ENCODE measurements at regions of chr6 and their contacts with region 1.

Region 1: DNA sequence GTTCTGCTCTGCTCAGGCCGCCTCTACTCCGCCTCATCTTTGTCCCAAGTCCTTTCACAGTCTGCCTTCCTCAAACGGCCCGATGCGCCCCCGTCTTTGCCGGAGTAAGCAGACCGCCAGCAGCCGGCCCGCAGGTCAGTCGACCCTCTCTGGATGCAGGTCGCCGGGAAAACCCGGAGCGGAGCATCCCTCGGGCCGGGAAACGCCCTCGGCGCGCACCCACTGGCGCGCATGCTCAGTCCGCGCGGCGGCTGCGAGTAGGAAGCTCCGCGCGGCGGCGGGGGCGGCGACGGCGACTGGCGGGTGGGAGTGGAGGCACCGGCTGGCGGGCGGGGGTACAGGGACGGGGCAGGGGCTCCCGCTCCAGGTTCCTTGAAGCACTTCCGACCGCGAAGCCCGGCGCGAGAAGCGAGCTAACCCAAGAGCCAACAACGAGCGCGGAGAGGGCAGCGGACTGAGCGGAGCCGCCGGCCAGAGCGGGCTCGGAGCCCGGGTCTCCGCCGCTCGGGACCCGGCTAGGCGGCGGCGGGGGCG is at the start of gene LRRC1:
- DNase-seq: peak; percentile 93 to 98
- H3K4me3 ChIP-seq: peak within 1 kb of the TSS; percentile 98
- H3K4me3 Mint-ChIP-seq: peak within 1 kb of the TSS; percentile 97
- H3K27ac Mint-ChIP-seq: peak within 1 kb of the TSS; percentile 94
- H3K4me1 ChIP-seq: peaks cover 24% of the 10 kb centered on the region
- H3K4me1 Mint-ChIP-seq: peaks cover 28% of the 10 kb centered on the region
- H3K27me3 ChIP-seq: no peaks in the 10 kb centered on the region
- H3K27me3 Mint-ChIP-seq: no peaks in the 10 kb centered on the region
- CTCF ChIP-seq: no peak
- total RNA-seq, gene LRRC1: 60.8 and 66.1 TPM in 2 replicates

Region 2: DNA sequence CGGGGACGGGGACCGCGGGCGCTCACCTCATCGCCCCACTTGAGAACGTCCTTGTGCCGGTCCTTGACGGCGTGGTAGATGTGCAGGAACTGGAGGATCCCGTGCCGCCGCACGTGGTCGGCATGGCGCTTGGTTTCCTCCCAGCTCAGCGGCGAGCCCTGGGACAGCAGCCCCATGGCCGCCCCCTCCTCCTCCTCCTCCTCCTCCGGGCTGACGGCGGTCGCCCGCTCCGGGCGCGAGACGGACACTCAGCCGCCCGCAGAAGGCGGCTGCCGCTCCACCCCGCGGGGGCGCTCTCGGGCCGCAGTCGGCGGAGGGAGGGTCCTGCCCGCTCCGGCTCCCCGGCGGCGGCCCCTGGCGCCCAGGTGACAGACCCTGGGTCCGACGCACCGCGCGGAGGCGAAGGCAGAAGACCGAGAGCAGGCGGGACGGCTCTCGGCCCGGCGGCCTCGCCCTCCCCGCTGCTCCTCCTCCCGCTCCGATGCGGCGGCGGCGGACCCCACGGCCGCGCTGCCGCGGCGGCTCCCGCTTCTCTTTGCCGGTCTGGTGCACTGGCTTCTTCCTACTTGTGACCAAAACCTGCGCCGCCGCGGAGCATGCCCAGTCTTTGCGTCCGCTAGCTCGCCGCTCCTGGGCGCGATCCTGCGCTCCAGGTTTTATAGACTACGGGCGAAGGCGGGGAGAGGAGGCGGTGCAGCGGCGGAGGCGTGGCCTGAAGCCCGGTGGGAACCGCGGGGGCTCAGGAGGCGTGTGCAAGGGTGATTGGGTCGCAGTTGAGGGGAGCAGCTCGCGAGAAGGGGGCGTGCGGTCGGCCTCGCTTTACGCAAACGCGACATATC is 250.1 kb before region 1 on chr6 and contains the start of gene GCLC:
- CTCF ChIA-PET with region 1: interaction called, 3 read pairs
- POLR2A ChIA-PET with region 1: no interaction called
- intact Hi-C with region 1: loop called (anchors 2 kb)
- DNase-seq: peak; percentile 93 to 94
- H3K4me3 ChIP-seq: peak within 1 kb of the TSS; percentile 98
- H3K4me3 Mint-ChIP-seq: peak within 1 kb of the TSS; percentile 98
- H3K27ac Mint-ChIP-seq: peak within 1 kb of the TSS; percentile 94
- H3K4me1 ChIP-seq: peaks cover 14% of the 10 kb centered on the region
- H3K4me1 Mint-ChIP-seq: peaks cover 19% of the 10 kb centered on the region
- H3K27me3 ChIP-seq: no peaks in the 10 kb centered on the region
- H3K27me3 Mint-ChIP-seq: no peaks in the 10 kb centered on the region
- CTCF ChIP-seq: peak; percentile 42 to 75
- total RNA-seq, gene GCLC: 70.1 and 88.9 TPM in 2 replicates

Region 3: GRCh38 chr6:53556986-53557715 is 237.6 kb before region 1 on chr6:
- CTCF ChIA-PET with region 1: no interaction called
- POLR2A ChIA-PET with region 1: no interaction called
- intact Hi-C with region 1: no loop called
- DNase-seq: no peak
- H3K4me3 ChIP-seq: no peak overlapping the region
- H3K4me3 Mint-ChIP-seq: no peak overlapping the region
- H3K27ac Mint-ChIP-seq: no peak overlapping the region
- H3K4me1 ChIP-seq: no peaks in the 10 kb centered on the region
- H3K4me1 Mint-ChIP-seq: no peaks in the 10 kb centered on the region
- H3K27me3 ChIP-seq: no peaks in the 10 kb centered on the region
- H3K27me3 Mint-ChIP-seq: no peaks in the 10 kb centered on the region
- CTCF ChIP-seq: no peak

Region 4: GRCh38 chr6:53734473-53735299 is 60.1 kb before region 1 on chr6:
- CTCF ChIA-PET with region 1: interaction called, 16 read pairs
- POLR2A ChIA-PET with region 1: interaction called, 25 read pairs
- intact Hi-C with region 1: no loop called
- DNase-seq: peak; percentile 84 to 86
- H3K4me3 ChIP-seq: no peak overlapping the region
- H3K4me3 Mint-ChIP-seq: peak overlapping the region; percentile 58
- H3K27ac Mint-ChIP-seq: peak overlapping the region; percentile 88
- H3K4me1 ChIP-seq: peaks cover 84% of the 10 kb centered on the region
- H3K4me1 Mint-ChIP-seq: peaks cover 48% of the 10 kb centered on the region
- H3K27me3 ChIP-seq: no peaks in the 10 kb centered on the region
- H3K27me3 Mint-ChIP-seq: no peaks in the 10 kb centered on the region
- CTCF ChIP-seq: peak; percentile 65 to 71

Region 5: GRCh38 chr6:53765270-53765669 is 29.5 kb before region 1 on chr6:
- CTCF ChIA-PET with region 1: no interaction called
- POLR2A ChIA-PET with region 1: interaction called, 36 read pairs
- intact Hi-C with region 1: loop called (anchors 1 kb)
- DNase-seq: peak; percentile 61 to 81
- H3K4me3 ChIP-seq: no peak overlapping the region
- H3K4me3 Mint-ChIP-seq: peak overlapping the region; percentile 52
- H3K27ac Mint-ChIP-seq: peak overlapping the region; percentile 69
- H3K4me1 ChIP-seq: peaks cover 54% of the 10 kb centered on the region
- H3K4me1 Mint-ChIP-seq: peaks cover 47% of the 10 kb centered on the region
- H3K27me3 ChIP-seq: no peaks in the 10 kb centered on the region
- H3K27me3 Mint-ChIP-seq: no peaks in the 10 kb centered on the region
- CTCF ChIP-seq: no peak

Region 6: DNA sequence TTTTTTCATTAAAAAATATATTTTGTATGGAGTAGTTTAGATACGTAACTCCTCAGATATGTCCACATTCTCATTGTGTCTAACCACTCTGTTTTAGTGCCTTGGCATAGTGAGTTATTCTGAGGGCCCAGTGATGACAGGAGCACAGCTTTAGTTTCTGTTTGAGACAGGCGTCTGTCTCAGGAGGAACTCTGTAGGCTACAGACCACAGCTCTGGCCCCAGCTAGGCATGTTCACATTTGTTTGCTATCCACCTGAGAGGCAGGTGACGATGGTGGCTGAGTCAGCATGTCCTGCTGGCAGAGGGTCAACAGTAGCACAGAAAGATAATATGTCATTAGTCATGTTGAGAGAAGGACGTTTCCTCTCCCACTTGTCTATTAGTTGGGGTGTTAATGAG is 16.3 kb after region 1 on chr6:
- CTCF ChIA-PET with region 1: no interaction called
- POLR2A ChIA-PET with region 1: interaction called, 6 read pairs
- intact Hi-C with region 1: loop called (anchors 1 kb)
- DNase-seq: peak; percentile 62 to 71
- H3K4me3 ChIP-seq: no peak overlapping the region
- H3K4me3 Mint-ChIP-seq: no peak overlapping the region
- H3K27ac Mint-ChIP-seq: peak overlapping the region; percentile 37
- H3K4me1 ChIP-seq: peaks cover 43% of the 10 kb centered on the region
- H3K4me1 Mint-ChIP-seq: peaks cover 26% of the 10 kb centered on the region
- H3K27me3 ChIP-seq: no peaks in the 10 kb centered on the region
- H3K27me3 Mint-ChIP-seq: no peaks in the 10 kb centered on the region
- CTCF ChIP-seq: no peak

Region 7: DNA sequence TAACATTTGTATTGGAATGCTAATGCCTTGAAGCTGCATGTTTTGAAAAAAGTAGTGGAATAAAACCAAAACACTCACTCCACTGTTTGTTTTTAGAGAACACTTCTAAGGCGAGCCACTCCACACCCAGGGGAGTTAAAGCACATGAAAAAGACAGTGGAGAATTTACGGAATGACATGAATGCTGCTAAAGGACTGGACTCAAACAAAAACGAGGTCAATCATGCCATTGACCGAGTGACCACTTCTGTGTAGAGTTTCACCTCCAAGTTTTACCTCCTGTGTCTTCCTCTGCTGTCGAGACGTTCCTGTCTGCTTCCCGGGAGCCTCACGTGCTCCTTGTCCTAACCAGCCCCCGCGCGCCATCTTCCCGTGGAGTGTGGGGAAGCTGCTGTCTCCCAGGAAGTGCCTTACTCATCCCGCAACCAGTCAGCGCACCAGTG is 127.8 kb after region 1 on chr6:
- CTCF ChIA-PET with region 1: no interaction called
- POLR2A ChIA-PET with region 1: interaction called, 4 read pairs
- intact Hi-C with region 1: loop called (anchors 5 kb)
- DNase-seq: peak; percentile 59 to 61
- H3K4me3 ChIP-seq: no peak overlapping the region
- H3K4me3 Mint-ChIP-seq: peak overlapping the region; percentile 58
- H3K27ac Mint-ChIP-seq: peak overlapping the region; percentile 91
- H3K4me1 ChIP-seq: peaks cover 35% of the 10 kb centered on the region
- H3K4me1 Mint-ChIP-seq: peaks cover 25% of the 10 kb centered on the region
- H3K27me3 ChIP-seq: no peaks in the 10 kb centered on the region
- H3K27me3 Mint-ChIP-seq: no peaks in the 10 kb centered on the region
- CTCF ChIP-seq: no peak

Region 8: DNA sequence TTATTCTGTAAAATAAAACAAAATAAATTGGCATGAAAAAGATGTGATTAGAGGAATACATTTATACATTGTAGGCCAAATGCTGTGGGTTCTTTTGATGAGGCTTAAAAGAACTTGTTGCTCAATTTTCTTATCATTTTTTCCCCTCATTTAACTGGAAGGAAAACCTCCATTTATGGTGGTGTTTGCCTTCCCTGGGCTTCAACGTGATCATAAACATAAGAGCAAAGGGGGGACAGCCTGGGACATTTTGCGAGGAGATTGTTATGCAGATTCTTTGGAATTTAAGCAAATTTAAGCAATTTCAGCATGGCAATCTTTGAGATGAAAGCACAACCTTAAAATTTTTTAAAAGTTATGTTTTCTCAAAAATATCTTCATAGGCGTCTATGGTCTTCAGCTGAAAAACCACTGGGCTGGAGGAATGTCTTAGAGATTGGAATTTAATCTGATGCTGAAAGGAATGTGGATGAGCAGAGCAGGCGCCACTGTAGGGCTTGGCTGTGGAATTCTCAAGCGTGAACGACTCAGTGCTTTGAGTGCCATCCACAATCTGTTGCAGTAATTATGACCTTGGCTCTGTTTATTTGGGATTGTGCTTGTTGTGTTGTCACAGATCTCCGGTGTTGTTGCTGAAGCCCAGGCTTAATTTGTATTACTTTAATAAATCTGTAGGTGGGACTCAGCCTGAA is 167.0 kb after region 1 on chr6:
- CTCF ChIA-PET with region 1: interaction called, 30 read pairs
- POLR2A ChIA-PET with region 1: interaction called, 25 read pairs
- intact Hi-C with region 1: no loop called
- DNase-seq: peak; percentile 70 to 85
- H3K4me3 ChIP-seq: no peak overlapping the region
- H3K4me3 Mint-ChIP-seq: peak overlapping the region; percentile 60
- H3K27ac Mint-ChIP-seq: peak overlapping the region; percentile 91
- H3K4me1 ChIP-seq: peaks cover 41% of the 10 kb centered on the region
- H3K4me1 Mint-ChIP-seq: peaks cover 12% of the 10 kb centered on the region
- H3K27me3 ChIP-seq: no peaks in the 10 kb centered on the region
- H3K27me3 Mint-ChIP-seq: no peaks in the 10 kb centered on the region
- CTCF ChIP-seq: no peak